H1 (cell line): ENCODE measurements at regions of chr1 and their contacts with region 1.

Region 1: DNA sequence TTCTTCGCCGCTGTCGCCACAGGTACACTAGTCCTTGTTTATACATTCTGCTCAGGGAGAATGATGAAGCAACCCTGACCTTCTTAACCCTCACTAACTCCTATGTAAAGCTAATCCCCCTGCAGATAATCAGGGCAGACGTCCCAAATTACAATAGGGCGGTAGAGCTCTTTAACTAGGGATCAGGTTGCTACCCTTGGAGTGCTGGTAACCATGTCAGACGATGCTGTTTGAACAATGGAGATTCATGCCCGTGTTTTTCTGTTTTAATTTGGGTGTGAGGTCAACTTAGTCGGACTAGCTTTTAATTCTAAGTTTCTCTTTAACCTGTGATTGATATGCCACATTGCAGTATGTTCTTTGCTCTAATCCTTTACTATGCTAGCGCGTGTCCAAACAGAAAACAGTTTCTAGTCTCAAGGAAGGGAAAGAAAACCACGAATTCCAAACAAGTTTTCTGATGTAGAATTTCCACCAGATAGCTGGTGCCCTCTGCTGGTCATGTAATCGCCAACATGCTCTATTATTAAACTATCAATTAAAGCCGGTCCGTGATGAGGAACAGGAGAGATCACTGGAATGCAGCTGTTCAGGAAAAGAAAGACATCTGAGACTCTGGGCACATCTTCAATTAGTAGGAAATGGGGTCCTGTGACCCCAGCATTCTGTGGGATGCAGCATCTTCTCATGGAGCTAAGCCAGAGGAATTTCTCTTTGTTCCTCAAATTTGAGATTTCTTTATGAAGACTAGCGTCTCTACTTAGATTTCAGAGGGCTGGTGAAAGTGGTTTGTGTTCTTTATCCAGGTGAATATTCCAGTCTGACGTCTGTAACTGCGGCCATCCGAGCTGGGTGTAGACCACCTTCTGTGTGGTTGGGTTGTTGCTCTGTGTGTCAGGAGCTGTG is 18.3 kb upstream of the VAMP3 start:
- DNase-seq: peak in 1 of 2 experiments; percentile 62
- H3K4me3 ChIP-seq: peak overlapping the region; percentile 22 to 53 (median 36); a peak in 7 of 8 replicates
- H3K27ac ChIP-seq: no peak overlapping the region
- H3K4me1 ChIP-seq: peaks cover 3 to 9% (median 6%) of the 10 kb centered on the region in 4 experiments; a peak in 6 of 7 replicates
- H3K27me3 ChIP-seq: no peaks in the 10 kb centered on the region
- CTCF ChIP-seq: peak in 2 of 3 experiments; percentile 75; a peak in 3 of 4 replicates
- EP300 ChIP-seq: no peak
- POLR2A ChIP-seq: no peak
- RAD21 ChIP-seq: peak; percentile 72 to 81

Region 2: GRCh38 chr1:7680207-7680954 is 72.4 kb before region 1 on chr1:
- CTCF ChIA-PET with region 1: interaction called, 554 read pairs
- POLR2A ChIA-PET with region 1: interaction called, 6 read pairs
- DNase-seq: peak in 1 of 2 experiments; percentile 63
- H3K4me3 ChIP-seq: peak overlapping the region; percentile 47 to 74 (median 54)
- H3K27ac ChIP-seq: no peak overlapping the region
- H3K4me1 ChIP-seq: peaks cover 0 to 3% (median 3%) of the 10 kb centered on the region in 4 experiments; a peak in 4 of 7 replicates
- H3K27me3 ChIP-seq: peaks cover 0 to 20% (median 14%) of the 10 kb centered on the region in 4 experiments; a peak in 6 of 7 replicates
- CTCF ChIP-seq: no peak
- EP300 ChIP-seq: no peak
- POLR2A ChIP-seq: peak in 1 of 2 experiments; percentile 10; a peak in 1 of 3 replicates
- RAD21 ChIP-seq: no peak

Region 3: DNA sequence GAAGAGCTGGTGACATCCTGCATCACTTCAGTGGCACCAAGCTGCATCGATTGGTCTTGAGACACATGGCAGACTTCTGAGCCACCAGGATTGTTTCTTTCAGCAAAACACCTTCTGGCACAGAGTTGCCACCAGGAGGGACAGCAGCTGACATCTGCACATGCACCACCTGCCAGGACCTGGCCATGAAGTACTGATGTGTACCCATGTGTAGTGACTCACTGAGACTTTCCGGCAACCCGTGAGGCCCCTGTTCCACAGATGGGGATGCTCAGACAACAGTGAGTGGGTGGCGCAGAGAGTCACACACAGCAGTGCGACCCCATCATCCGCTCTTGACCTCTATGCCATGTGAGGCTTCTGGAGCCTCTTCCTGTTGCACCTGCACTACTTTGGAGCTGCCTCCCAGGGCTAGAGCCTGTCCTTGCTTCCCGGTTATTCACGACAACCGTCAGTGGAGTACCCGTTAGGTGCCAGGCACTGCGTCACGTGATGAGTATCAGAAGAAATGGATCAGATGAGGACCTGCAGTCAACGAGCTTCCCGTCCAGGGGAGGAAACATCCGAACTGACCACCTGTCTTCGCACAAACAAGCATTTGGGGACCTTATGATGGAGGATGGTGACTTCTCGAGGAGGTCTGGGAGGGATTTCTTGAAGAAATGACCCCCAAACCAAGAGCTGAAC is 62.1 kb before region 1 on chr1:
- CTCF ChIA-PET with region 1: interaction called, 21 read pairs
- POLR2A ChIA-PET with region 1: interaction called, 3 read pairs
- DNase-seq: no peak
- H3K4me3 ChIP-seq: no peak overlapping the region
- H3K27ac ChIP-seq: no peak overlapping the region
- H3K4me1 ChIP-seq: peaks cover 0 to 9% (median 0%) of the 10 kb centered on the region in 4 experiments; a peak in 1 of 7 replicates
- H3K27me3 ChIP-seq: no peaks in the 10 kb centered on the region; a peak in 1 of 7 replicates
- CTCF ChIP-seq: no peak
- EP300 ChIP-seq: no peak
- POLR2A ChIP-seq: no peak
- RAD21 ChIP-seq: no peak

Region 4: GRCh38 chr1:7698641-7699040 is 54.1 kb before region 1 on chr1:
- CTCF ChIA-PET with region 1: interaction called, 13 read pairs
- POLR2A ChIA-PET with region 1: interaction called, 5 read pairs
- DNase-seq: no peak
- H3K4me3 ChIP-seq: no peak overlapping the region
- H3K27ac ChIP-seq: no peak overlapping the region
- H3K4me1 ChIP-seq: peaks cover 2 to 14% (median 9%) of the 10 kb centered on the region in 4 experiments; a peak in 5 of 7 replicates
- H3K27me3 ChIP-seq: peaks cover 0 to 15% (median 12%) of the 10 kb centered on the region in 4 experiments; a peak in 5 of 7 replicates
- CTCF ChIP-seq: no peak
- EP300 ChIP-seq: no peak
- POLR2A ChIP-seq: no peak
- RAD21 ChIP-seq: no peak

Region 5: GRCh38 chr1:7719468-7720094 is 33.2 kb before region 1 on chr1:
- CTCF ChIA-PET with region 1: interaction called, 13 read pairs
- POLR2A ChIA-PET with region 1: interaction called, 3 read pairs
- DNase-seq: no peak
- H3K4me3 ChIP-seq: no peak overlapping the region
- H3K27ac ChIP-seq: no peak overlapping the region
- H3K4me1 ChIP-seq: peaks cover 0 to 4% (median 0%) of the 10 kb centered on the region in 4 experiments; a peak in 1 of 7 replicates
- H3K27me3 ChIP-seq: peaks cover 0 to 9% (median 1%) of the 10 kb centered on the region in 4 experiments; a peak in 3 of 7 replicates
- CTCF ChIP-seq: no peak
- EP300 ChIP-seq: no peak
- POLR2A ChIP-seq: no peak
- RAD21 ChIP-seq: no peak

Region 6: GRCh38 chr1:7726623-7727022 is 26.1 kb before region 1 on chr1:
- CTCF ChIA-PET with region 1: interaction called, 13 read pairs
- POLR2A ChIA-PET with region 1: no interaction called
- DNase-seq: no peak
- H3K4me3 ChIP-seq: no peak overlapping the region
- H3K27ac ChIP-seq: no peak overlapping the region
- H3K4me1 ChIP-seq: peaks cover 0 to 6% (median 3%) of the 10 kb centered on the region in 4 experiments; a peak in 2 of 7 replicates
- H3K27me3 ChIP-seq: no peaks in the 10 kb centered on the region
- CTCF ChIP-seq: no peak
- EP300 ChIP-seq: no peak
- POLR2A ChIP-seq: no peak
- RAD21 ChIP-seq: no peak